Body of pancreas (tissue), 4 donors: ENCODE measurements at regions of chr9 and their contacts with region 1.

Region 1: GRCh38 chr9:105414947-105415661 is 32.7 kb upstream of the FSD1L start:
- DNase-seq: peak; percentile 63 to 73 (median 65)
- ATAC-seq: peak; percentile 68
- H3K4me3 ChIP-seq: no peak overlapping the region
- H3K27ac ChIP-seq: no peak overlapping the region
- H3K4me1 ChIP-seq: peaks cover 4% of the 10 kb centered on the region
- H3K27me3 ChIP-seq: no peaks in the 10 kb centered on the region
- CTCF ChIP-seq: peak in 6 of 7 experiments; percentile 72 to 88 (median 86)
- POLR2A ChIP-seq: no peak

Region 2: GRCh38 chr9:104863180-104863883 is 551.8 kb before region 1 on chr9:
- intact Hi-C with region 1: loop called (anchors 10 kb)
- DNase-seq: peak; percentile 37 to 64 (median 56)
- ATAC-seq: peak; percentile 78
- H3K4me3 ChIP-seq: no peak overlapping the region
- H3K27ac ChIP-seq: no peak overlapping the region
- H3K4me1 ChIP-seq: no peaks in the 10 kb centered on the region
- H3K27me3 ChIP-seq: no peaks in the 10 kb centered on the region
- CTCF ChIP-seq: peak; percentile 36 to 81 (median 66)
- POLR2A ChIP-seq: no peak

Region 3: DNA sequence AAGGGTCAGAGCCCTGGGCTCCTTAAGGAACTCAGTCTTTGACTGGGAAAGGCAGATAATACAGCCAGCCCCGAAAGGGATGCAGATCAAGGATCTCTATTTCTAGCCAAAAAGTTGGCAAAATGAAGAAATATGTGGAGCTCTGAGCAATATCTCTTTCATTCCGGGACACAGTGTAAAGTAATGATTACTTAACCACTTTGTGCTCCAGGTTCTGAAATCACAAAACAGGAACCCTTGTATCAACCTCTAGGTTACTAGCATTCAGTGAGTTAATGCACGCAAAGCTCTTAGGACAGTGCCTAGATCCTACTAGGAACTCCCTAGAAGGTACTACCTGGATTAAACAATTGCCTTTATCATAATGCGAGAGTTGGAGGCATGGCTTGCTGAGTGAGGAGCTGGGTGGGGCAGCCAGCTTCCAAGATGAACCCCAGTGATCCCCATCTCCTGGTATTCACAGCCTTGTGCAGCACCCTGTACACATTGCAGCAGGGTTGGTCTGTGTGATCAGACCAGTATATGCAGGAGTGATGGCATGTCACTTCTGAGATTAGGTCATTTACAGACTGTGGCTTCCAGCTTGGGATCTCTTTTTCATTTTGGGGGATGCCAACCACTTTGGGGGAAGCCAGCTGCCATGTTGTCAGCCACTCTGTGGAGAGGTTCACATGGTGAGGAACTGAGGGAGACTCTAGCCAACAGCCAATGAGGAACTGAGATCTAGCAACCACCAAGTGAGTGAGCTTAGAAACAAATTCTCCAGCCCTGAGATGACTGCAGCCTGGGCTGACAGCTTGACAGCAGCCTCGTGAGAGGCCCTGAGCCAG is 273.7 kb before region 1 on chr9:
- intact Hi-C with region 1: no loop called
- DNase-seq: peak in 1 of 4 donors; percentile 22
- ATAC-seq: no peak
- H3K4me3 ChIP-seq: no peak overlapping the region
- H3K27ac ChIP-seq: no peak overlapping the region
- H3K4me1 ChIP-seq: peaks cover 5% of the 10 kb centered on the region
- H3K27me3 ChIP-seq: no peaks in the 10 kb centered on the region
- CTCF ChIP-seq: no peak
- POLR2A ChIP-seq: no peak

Region 4: DNA sequence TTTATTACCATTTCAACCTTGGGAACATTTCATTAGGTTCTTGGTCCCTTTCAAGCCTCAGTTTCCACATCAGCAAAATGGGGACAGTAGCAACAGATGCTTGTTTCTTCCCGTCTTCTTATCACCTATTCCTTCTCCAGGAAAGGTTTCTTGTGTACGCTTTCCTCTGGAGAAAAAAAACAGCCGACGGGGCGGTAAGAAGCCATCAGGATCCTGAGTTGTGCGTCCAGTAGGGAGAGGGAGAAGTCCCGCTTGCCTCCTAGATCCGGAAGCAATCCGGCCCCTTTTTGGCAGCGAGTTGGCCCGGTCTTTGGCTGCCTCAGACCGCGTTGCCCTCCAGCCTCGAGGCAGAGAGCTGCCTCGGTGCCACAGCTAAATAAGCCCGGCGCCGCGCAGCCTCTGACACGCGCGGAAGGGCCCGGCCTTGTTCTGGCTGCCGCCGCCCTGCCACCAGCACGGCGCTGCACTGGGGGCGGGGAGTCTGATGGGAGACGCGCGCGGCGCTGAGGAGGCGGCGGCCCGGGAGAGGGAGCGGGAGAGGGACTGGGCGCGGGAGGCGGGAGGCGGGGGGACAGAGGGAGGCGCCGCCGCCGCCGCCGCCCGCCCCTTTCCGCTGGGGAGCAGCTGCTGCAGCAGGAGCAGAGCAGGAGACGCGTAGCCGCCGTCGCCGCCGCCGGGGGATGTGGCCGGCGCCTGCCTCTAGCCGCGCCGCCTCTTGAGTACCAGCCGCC is 170.9 kb before region 1 on chr9 and contains the start of gene SLC44A1:
- intact Hi-C with region 1: loop called (anchors 10 kb)
- DNase-seq: peak; percentile 97 to 99 (median 98)
- ATAC-seq: peak; percentile 94
- H3K4me3 ChIP-seq: peak within 1 kb of the TSS; percentile 78 to 89
- H3K27ac ChIP-seq: peak within 1 kb of the TSS; percentile 66 to 98 (median 90)
- H3K4me1 ChIP-seq: peaks cover 25% of the 10 kb centered on the region
- H3K27me3 ChIP-seq: no peaks in the 10 kb centered on the region
- CTCF ChIP-seq: peak in 4 of 7 experiments; percentile 14 to 43 (median 26)
- POLR2A ChIP-seq: peak; percentile 60 to 94 (median 65)
- total RNA-seq, gene SLC44A1: 15.5 to 39.4 TPM

Region 5: GRCh38 chr9:105466898-105467455 is 51.9 kb after region 1 on chr9:
- intact Hi-C with region 1: no loop called
- DNase-seq: no peak
- ATAC-seq: no peak
- H3K4me3 ChIP-seq: no peak overlapping the region
- H3K27ac ChIP-seq: no peak overlapping the region
- H3K4me1 ChIP-seq: no peaks in the 10 kb centered on the region
- H3K27me3 ChIP-seq: no peaks in the 10 kb centered on the region
- CTCF ChIP-seq: no peak
- POLR2A ChIP-seq: no peak